ENCODE measurements at regions of chr22 and their contacts with region 1.

Region 1: GRCh38 chr22:32080904-32081303 is 37.8 kb downstream of the SLC5A1 start:
- DNase-seq: peak in 1 of 3 donors; percentile 65
- ATAC-seq: peak; percentile 67
- H3K4me3 ChIP-seq: no peak overlapping the region
- H3K4me1 ChIP-seq: peaks cover 4% of the 10 kb centered on the region
- CTCF ChIP-seq: peak; percentile 53

Region 2: DNA sequence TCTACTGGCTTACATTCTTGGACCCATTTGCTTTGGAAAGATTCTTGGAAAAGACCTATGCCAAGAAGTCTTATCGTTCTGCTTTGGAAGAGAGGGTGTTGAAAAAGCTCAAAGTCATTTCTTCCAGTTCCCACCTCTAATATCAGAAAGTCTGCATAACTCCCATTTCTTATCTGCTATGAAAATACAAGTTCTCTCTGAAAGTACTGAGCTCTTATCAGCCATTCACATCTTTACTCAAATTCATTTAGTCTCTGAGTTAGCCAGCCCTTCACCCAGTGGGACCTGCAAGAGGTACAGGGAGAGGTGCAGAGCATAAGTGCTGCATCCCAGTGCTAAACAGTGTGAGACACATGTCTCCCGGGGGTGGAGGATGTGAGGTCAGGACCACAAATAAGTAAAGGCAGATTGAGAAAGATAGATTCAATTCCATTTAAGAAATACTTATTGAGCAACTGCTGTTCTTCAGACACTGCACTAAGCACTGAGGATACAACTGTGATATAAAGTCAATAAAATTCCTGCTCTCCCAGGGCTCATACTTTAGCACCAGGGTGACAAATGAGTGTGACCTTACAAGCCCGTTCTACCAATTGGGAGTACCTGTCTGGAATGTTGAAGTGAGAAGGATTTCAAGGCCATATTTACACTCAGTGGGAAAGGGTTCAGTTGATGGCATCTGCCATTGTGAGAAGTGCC is 495.6 kb before region 1 on chr22:
- intact Hi-C with region 1: no loop called
- DNase-seq: no peak
- ATAC-seq: no peak
- H3K4me3 ChIP-seq: no peak overlapping the region
- H3K4me1 ChIP-seq: no peaks in the 10 kb centered on the region
- CTCF ChIP-seq: no peak

Region 3: GRCh38 chr22:31977141-31977841 is 103.6 kb before region 1 on chr22:
- intact Hi-C with region 1: loop called in 1 of 2 experiments (anchors 5 kb)
- DNase-seq: peak; percentile 76 to 97 (median 92)
- ATAC-seq: peak; percentile 79
- H3K4me3 ChIP-seq: no peak overlapping the region
- H3K4me1 ChIP-seq: peaks cover 10% of the 10 kb centered on the region
- CTCF ChIP-seq: peak; percentile 50

Region 4: DNA sequence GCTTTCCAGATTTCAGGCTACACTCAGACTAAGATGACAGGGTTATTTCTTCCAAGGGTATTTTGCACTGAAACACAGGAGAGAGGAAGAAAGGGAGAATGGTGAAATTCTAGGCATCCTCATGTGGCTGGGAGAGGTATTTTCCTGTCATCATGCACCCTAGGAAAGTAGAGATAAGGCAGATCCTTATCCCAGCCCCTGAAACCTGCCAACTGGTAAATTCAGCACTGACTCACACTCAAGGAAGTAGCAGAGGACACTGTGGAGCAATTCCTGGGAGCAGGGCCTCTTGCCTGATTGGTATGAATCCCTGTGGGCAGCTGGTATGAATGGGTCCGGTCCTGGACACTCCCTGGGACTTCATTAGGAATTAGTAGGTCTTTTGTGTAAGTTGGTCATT is 75.5 kb before region 1 on chr22:
- intact Hi-C with region 1: no loop called
- DNase-seq: no peak
- ATAC-seq: peak; percentile 91
- H3K4me3 ChIP-seq: no peak overlapping the region
- H3K4me1 ChIP-seq: no peaks in the 10 kb centered on the region
- CTCF ChIP-seq: no peak

Region 5: DNA sequence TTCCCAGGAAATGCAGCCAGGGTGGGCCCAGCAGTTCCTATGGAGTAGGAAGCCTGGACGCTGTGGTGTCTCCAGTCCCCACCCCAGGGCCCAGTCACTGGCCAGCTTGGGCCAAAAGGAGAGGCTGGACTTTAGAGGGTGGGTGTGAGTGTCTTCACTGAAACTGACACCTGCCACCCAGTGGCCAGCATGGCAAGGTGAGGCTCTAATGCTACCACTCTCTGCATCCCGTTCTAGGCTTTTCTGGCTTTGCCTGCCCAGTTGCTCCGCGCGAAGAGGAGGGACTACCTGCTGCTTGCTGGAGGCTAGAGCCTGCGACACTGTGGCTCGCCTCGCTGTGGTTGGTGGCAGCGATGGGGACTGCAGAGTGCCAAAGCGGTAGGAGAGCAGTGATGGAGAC is 42.8 kb after region 1 on chr22:
- intact Hi-C with region 1: no loop called
- DNase-seq: no peak
- ATAC-seq: peak; percentile 31
- H3K4me3 ChIP-seq: no peak overlapping the region
- H3K4me1 ChIP-seq: no peaks in the 10 kb centered on the region
- CTCF ChIP-seq: no peak

Region 6: DNA sequence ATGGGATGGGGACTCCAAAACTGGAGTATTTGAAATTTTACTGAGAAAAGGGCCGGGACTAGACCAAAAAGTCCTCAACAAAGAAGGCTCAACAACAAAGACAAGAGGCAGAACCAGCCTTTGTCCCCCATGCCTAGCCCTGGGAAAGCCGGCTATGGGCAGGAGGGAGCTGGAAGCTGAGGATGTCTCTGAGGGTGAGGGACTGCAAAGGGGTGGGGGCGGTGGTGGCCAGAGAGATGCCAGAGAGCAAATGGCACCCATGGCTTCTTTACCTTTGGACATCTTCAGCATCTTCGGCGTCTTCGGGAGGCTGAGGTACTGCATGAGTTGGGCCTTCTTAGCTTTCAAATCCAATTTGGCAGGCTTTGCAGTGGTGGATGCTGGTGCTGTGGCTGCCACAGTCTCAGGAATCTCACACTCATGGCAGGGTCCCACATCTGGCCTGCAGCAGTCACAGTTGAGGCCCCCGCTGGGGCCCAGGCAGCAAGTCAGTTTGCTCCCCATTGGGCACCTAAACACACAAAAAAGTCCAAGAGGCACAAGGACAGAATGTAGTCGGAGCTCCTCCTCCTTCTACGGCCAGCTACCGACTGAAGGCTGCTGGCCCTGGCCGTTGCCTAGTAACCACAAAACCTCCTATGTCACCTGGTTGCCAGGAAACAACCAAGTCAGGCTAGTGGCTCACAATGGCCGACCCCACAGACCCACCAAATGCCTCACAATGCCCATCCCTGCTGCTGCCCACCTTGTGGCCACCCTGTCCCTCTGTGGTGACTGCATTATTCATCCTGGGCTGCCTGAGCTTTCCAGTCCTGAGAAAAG is 78.0 kb after region 1 on chr22 and contains the start of gene C22orf42:
- intact Hi-C with region 1: no loop called
- DNase-seq: no peak
- ATAC-seq: no peak
- H3K4me3 ChIP-seq: no peak within 1 kb of the TSS
- H3K4me1 ChIP-seq: no peaks in the 10 kb centered on the region
- CTCF ChIP-seq: no peak
- total RNA-seq, gene C22orf42: not detected